Sciatic nerve (tissue), 2 donors: ENCODE measurements at regions of chr12 and their contacts with region 1.

Region 1: GRCh38 chr12:19248929-19249602 is 119.5 kb downstream of the PLEKHA5 start:
- DNase-seq: no peak
- ATAC-seq: peak; percentile 45

Region 2: GRCh38 chr12:19048943-19049342 is 200.1 kb before region 1 on chr12:
- intact Hi-C with region 1: no loop called
- DNase-seq: no peak
- ATAC-seq: no peak

Region 3: GRCh38 chr12:19171736-19172135 is 77.3 kb before region 1 on chr12:
- intact Hi-C with region 1: loop called (anchors 2 kb)
- DNase-seq: no peak
- ATAC-seq: no peak

Region 4: DNA sequence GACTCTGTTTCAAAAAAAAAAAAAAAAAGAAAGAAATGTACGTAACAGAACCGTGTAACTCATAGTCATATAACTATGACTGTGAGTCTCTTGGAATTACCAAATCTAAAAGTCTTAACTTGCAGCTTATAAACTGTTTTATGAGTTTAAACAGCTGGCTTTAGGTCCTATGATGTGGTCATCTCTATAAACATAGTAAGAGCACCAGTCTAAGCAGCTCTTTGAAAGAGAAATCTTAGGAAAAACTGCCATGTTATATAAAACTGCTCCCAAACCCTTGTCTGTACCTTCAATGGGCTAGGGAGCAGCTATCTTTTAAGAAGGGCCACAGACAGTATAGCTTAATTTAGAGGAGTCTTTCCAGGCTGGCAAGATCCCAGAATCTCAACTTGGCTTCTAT is 74.7 kb after region 1 on chr12:
- intact Hi-C with region 1: no loop called
- DNase-seq: no peak
- ATAC-seq: no peak